ENCODE measurements at regions of chr6 and their contacts with region 1.

Region 1: GRCh38 chr6:143575440-143575839 is 63.9 kb upstream of the FUCA2 start:
- DNase-seq: peak; percentile 75
- CTCF ChIP-seq: peak; percentile 77

Region 2: GRCh38 chr6:143361536-143362191 is 213.8 kb before region 1 on chr6:
- CTCF ChIA-PET with region 1: no interaction called
- POLR2A ChIA-PET with region 1: no interaction called
- DNase-seq: no peak
- CTCF ChIP-seq: no peak

Region 3: GRCh38 chr6:143510991-143511891 is 64.2 kb before region 1 on chr6 and contains the start of gene FUCA2:
- CTCF ChIA-PET with region 1: interaction called, 12 read pairs
- POLR2A ChIA-PET with region 1: no interaction called
- DNase-seq: peak; percentile 69
- CTCF ChIP-seq: no peak

Region 4: GRCh38 chr6:143556529-143556928 is 18.9 kb before region 1 on chr6:
- CTCF ChIA-PET with region 1: interaction called, 20 read pairs
- POLR2A ChIA-PET with region 1: no interaction called
- DNase-seq: no peak
- CTCF ChIP-seq: no peak

Region 5: GRCh38 chr6:143592335-143592734 is 16.9 kb after region 1 on chr6:
- CTCF ChIA-PET with region 1: interaction called, 13 read pairs
- POLR2A ChIA-PET with region 1: no interaction called
- DNase-seq: no peak
- CTCF ChIP-seq: no peak

Region 6: DNA sequence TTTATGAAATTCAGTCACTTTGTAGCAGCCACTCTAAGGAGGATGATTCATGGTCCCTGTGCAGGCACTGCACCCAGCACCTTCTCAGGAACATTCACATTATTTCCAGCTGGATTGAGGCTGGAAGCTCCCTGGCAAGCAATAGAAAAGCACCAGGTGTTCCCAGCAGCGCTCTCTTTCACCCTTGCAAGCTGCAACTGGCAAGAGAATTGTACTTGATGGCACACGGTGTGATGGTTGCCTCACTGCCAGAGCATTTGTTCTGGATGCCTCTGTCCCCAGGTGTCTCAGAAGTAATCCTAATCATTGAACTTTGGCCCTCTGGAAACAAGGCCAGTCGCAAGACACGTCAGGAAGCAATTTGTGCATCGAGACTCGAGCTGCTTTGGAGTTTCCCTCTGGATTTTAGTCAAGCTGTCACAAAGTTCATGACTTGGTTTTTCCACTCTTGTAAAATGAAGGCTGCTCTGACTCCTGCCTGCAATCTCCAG is 77.4 kb after region 1 on chr6:
- CTCF ChIA-PET with region 1: no interaction called
- POLR2A ChIA-PET with region 1: no interaction called
- DNase-seq: no peak
- CTCF ChIP-seq: no peak

Region 7: GRCh38 chr6:144013486-144013909 is 438.1 kb after region 1 on chr6:
- CTCF ChIA-PET with region 1: interaction called, 70 read pairs
- POLR2A ChIA-PET with region 1: no interaction called
- DNase-seq: peak; percentile 50
- CTCF ChIP-seq: peak; percentile 85

Region 8: DNA sequence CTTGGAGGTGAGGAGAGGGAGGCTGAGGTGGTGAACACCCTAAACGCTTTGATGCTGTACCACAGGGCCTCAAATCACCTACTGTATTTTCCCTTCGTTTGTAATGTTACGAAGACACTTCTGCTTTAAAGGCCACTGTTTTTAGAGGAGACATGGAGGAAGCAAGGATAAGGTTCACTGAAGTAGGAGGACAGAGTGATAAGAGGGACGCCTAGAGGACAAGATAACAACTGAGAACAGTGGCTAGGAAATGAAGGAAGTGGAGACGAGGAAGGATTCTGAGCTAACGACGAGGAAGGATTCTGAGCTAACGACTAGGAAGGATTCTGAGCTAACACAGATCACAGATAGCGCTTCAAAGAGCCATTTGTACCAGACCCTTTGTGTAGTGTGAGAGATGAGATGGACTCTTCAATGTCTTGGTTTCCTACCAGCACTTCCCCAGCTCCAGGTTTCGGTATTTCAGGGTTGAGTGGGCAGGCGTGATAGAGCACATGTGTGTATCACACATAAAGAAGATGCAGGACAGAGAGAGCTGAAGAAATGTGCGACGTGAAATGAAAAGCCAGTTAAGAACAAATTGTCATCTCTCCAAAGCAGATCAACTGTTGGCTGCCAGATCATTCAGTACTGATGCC is 512.5 kb after region 1 on chr6:
- CTCF ChIA-PET with region 1: interaction called, 26 read pairs
- POLR2A ChIA-PET with region 1: no interaction called
- DNase-seq: no peak
- CTCF ChIP-seq: peak; percentile 50